Tibial artery (tissue), 4 donors: ENCODE measurements at regions of chr18 and their contacts with region 1.

Region 1: DNA sequence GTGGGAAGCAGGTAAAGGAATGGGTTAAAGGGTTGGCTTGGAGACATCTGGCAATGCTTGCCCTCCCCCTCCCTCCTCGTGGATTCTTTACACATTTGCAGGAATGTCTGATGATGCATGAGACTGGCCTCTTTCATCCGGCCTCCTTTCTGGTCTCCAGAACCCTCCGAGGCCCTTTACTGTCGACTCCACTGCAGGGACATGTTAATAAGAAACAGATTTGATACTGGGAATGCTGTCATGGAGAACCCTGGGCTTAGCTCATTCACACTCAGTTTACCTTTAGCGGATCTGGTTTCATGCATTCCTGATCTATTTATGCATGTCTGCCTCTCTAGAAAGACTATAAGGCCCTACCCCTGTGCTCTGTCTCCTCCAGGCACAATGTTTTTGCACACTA is 238.7 kb downstream of the TGIF1 start:
- DNase-seq: no peak
- H3K4me3 ChIP-seq: no peak overlapping the region
- H3K27ac ChIP-seq: no peak overlapping the region
- H3K4me1 ChIP-seq: no peaks in the 10 kb centered on the region
- H3K27me3 ChIP-seq: no peaks in the 10 kb centered on the region
- CTCF ChIP-seq: no peak

Region 2: GRCh38 chr18:3725115-3725514 is 36.4 kb after region 1 on chr18:
- intact Hi-C with region 1: loop called (anchors 2 kb)
- DNase-seq: no peak
- H3K4me3 ChIP-seq: no peak overlapping the region
- H3K27ac ChIP-seq: no peak overlapping the region
- H3K4me1 ChIP-seq: peaks cover 0 to 10% (median 2%) of the 10 kb centered on the region in 4 donors
- H3K27me3 ChIP-seq: no peaks in the 10 kb centered on the region
- CTCF ChIP-seq: no peak